Cardiac septum (tissue), 1 donor: ENCODE measurements at regions of chr7 and their contacts with region 1.

Region 1: DNA sequence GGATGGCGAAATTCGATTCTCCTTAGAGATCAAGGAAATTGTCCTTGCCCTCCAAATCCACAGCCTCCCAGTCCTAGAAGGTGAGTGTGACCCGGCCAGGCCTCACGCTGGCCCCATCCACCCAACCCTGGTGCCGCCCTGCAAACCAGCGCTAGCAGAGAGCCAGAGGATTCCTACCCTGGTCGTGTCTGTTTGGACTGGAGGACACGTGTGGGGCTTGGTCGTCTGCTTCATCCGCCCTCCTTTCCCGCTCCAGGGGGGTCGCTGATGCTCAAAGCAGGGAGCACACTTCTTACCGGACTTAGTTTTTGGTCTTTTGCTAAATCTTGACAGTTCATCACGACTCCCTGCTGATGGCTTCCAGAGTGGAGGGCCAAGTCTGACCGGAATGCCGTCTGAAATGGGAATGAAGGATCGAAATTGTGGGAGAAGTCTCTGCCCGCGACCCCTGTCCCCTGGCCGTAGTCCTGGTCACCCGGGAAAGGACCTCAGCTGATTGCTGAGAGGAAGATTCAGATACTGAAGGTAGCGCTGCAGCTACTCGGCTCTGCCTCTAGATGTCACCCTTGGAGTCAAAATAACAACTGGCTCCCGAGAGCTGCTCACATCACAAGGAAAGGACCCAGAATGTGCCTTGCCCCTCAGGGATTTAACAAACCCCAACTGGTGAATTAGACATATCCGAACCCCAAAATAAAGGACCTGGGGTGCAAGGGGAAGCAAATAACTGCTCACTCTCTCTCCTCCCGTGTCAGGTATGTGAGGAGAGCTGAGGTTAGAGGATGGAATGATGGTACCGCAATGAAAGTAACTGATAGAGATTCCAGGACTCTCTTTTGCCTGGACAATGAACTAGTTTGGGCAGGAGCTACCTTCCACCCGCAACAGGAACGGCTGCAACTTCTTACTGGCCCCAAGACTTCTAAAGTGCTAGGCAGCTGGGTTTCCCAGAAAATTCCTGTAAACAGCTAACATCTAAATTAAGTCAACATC is 23.5 kb upstream of the ORC5 start:
- DNase-seq: no peak

Region 2: GRCh38 chr7:104848138-104848990 is 617.0 kb after region 1 on chr7:
- intact Hi-C with region 1: loop called (anchors 2 kb)
- DNase-seq: no peak

Region 3: GRCh38 chr7:104914421-104914820 is 683.1 kb after region 1 on chr7:
- intact Hi-C with region 1: loop called (anchors 10 kb)
- DNase-seq: no peak